PC-9 (cell line): ENCODE measurements at regions of chr4 and their contacts with region 1.

Region 1: DNA sequence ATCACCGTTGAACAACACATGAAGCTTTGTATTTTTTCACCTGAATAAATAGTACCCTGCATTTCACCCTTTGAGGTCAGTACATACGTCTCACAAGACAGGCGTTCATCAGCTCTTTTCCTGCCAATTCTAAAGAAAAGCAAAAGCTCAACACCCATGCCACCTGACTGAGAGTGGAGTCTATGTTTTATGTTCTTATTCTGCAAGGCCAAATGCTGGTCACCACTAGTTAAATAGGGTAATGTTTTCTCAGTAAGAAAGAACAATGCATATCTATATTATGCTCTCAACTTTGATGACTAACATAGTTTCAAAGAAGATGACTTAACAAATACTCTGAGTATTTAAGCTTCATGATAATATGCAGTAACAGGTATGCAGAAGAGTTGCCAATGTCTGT is 336.3 kb upstream of the BMP3 start:
- DNase-seq: peak in 1 of 2 experiments; percentile 41
- H3K4me3 ChIP-seq: no peak overlapping the region
- H3K27ac ChIP-seq: no peak overlapping the region
- H3K4me1 ChIP-seq: 0 out of 2 replicates have a peak, but pooled peaks cover 6% of the 10 kb centered on the region
- H3K27me3 ChIP-seq: no peaks in the 10 kb centered on the region
- CTCF ChIP-seq: no peak

Region 2: DNA sequence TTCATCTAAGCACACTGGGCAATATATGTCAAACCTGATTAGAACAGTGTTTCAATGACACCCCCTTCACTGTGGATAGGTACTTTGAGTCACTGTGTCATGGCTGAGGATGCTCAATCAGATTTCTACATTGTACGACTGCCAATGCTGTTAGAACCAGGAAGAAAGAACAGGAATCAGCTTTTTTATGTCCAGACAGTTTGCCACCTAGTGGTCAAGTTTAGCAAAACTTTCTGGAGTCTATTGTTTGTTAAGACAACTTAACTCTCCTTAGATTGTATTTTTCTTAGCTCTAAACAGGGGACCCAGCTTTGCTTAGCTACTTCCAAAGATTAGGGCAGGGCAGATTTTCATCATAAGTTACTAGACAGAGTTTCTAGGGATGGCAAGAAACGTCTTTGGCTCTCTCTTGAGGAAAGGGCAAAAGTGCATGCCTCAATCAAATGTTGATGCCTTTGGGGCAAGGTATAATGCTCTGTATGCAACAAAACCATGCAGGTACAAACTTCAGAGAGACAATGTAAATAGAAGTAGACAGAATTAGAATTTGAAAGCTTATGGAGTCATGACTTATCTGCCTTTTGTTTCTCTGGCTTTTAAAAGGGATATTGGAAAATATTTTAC is 295.9 kb after region 1 on chr4:
- CTCF ChIA-PET with region 1: no interaction called
- POLR2A ChIA-PET with region 1: no interaction called
- intact Hi-C with region 1: loop called (anchors 10 kb)
- DNase-seq: peak in 1 of 2 experiments; percentile 7
- H3K4me3 ChIP-seq: no peak overlapping the region
- H3K27ac ChIP-seq: no peak overlapping the region
- H3K4me1 ChIP-seq: no peaks in the 10 kb centered on the region
- H3K27me3 ChIP-seq: no peaks in the 10 kb centered on the region
- CTCF ChIP-seq: peak; percentile 76